Right ventricle myocardium inferior (tissue), 1 donor: ENCODE measurements at regions of chr1 and their contacts with region 1.

Region 1: GRCh38 chr1:54558434-54559030 is 10.5 kb downstream of the ACOT11 start:
- DNase-seq: no peak
- ATAC-seq: peak; percentile 26

Region 2: GRCh38 chr1:54581621-54582035 is 23.1 kb after region 1 on chr1:
- intact Hi-C with region 1: loop called (anchors 1 kb)
- DNase-seq: peak; percentile 90
- ATAC-seq: peak; percentile 90

Region 3: DNA sequence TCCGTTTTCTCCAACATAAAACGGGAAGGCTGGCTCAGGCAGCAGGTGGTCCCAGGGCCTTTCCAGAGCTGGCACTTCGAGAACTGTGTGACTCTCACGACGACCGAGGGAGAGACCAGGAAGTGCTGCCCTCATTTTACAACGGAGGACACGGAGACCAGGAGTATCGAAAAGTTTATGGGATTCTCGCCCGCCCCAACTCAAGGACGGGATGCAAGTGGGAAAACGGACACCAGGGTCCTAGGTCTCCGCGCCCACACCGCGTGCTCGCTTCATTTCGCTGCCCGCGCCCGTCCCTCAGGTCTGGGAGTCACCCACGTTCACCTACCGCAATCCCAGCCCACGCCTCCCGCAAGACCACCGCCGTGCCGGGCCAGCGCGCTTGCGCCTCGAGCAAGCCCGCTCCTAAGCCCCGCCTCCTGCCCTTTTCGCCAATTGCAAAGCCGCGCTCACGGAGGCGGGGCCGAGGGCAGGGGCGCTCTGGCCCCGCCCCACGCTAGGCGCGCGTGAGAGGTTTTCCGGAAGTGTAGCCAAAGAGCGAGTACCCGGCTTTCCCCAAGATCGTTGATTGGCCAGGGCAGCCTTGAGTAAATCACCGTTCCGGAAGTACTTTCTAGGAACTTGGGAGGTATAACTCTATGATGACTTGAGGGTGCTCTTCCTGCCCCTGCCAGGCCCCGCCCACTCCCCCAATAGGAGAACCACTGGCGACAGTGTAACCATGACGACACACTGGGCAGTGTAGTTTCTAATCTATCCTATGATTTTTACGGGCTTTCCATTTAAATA is 205.8 kb after region 1 on chr1 and contains the start of gene PARS2:
- intact Hi-C with region 1: no loop called
- DNase-seq: peak; percentile 98
- ATAC-seq: peak; percentile 100
- total RNA-seq, gene PARS2: 4.2 TPM